Heart right ventricle (tissue), 16 donors: ENCODE measurements at regions of chr2 and their contacts with region 1.

Region 1: GRCh38 chr2:20446917-20447436 is at the start of gene RHOB:
- DNase-seq: peak; percentile 96 to 97
- ATAC-seq: peak; percentile 88 to 93 (median 90)
- H3K4me3 ChIP-seq: peak within 1 kb of the TSS; percentile 81 to 97 (median 93)
- H3K27ac ChIP-seq: peak within 1 kb of the TSS; percentile 95 to 100 (median 99)
- H3K4me1 ChIP-seq: peaks cover 13 to 61% (median 52%) of the 10 kb centered on the region in 9 donors
- H3K27me3 ChIP-seq: no peaks in the 10 kb centered on the region
- CTCF ChIP-seq: peak in 2 of 9 donors; percentile 4 to 7
- total RNA-seq, gene RHOB: 105 to 313 (median 157) TPM

Region 2: DNA sequence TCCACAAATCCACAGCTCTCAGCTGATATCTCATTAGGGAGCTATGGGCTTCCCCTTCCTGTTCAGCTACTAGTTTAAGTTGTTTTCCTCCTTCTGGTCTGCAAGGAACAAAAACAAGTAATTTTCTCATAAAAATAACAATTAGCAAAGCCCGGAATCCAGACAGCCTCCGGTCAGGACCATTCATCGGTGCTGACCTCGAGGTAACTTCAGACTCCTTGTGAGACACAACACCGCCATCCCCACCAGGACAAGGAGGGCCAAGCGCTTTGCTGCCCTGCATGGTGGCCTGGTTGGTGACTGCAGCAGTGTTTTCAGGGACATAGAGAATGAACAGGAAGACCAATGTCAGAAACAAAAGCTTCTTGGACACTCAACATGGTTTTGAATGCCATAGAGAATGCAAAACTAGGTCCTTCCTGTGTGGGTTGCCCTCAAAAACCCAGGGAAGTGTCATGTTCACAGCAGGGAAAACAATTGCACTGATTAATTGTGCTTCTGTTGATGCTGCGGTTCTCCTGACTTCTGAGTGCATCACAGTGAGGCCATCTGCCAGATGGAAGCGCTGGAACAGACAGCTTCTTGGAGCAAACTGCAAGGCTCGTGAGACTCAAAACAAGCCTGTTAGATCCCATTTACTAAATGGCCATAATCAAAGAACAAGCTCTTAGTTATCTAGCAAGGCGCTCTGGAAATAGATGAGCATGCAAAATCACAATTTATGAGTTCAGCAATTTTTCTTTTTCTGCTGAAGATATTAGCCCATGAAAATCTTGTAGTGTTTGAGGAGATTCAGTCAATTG is 126.8 kb after region 1 on chr2:
- intact Hi-C with region 1: loop called in 3 of 10 experiments (anchors 2 to 5 kb)
- DNase-seq: no peak
- ATAC-seq: no peak
- H3K4me3 ChIP-seq: no peak overlapping the region
- H3K27ac ChIP-seq: peak overlapping the region in 9 of 10 donors; percentile 63 to 95 (median 77)
- H3K4me1 ChIP-seq: peaks cover 42 to 100% (median 96%) of the 10 kb centered on the region in 9 donors
- H3K27me3 ChIP-seq: no peaks in the 10 kb centered on the region
- CTCF ChIP-seq: no peak

Region 3: GRCh38 chr2:20578895-20579825 is 132.2 kb after region 1 on chr2:
- intact Hi-C with region 1: loop called in 2 of 10 experiments (anchors 5 kb)
- DNase-seq: peak; percentile 73 to 92
- ATAC-seq: peak; percentile 85 to 94 (median 91)
- H3K4me3 ChIP-seq: no peak overlapping the region
- H3K27ac ChIP-seq: peak overlapping the region; percentile 57 to 95 (median 82)
- H3K4me1 ChIP-seq: peaks cover 28 to 83% (median 70%) of the 10 kb centered on the region in 9 donors
- H3K27me3 ChIP-seq: no peaks in the 10 kb centered on the region
- CTCF ChIP-seq: no peak

Region 4: DNA sequence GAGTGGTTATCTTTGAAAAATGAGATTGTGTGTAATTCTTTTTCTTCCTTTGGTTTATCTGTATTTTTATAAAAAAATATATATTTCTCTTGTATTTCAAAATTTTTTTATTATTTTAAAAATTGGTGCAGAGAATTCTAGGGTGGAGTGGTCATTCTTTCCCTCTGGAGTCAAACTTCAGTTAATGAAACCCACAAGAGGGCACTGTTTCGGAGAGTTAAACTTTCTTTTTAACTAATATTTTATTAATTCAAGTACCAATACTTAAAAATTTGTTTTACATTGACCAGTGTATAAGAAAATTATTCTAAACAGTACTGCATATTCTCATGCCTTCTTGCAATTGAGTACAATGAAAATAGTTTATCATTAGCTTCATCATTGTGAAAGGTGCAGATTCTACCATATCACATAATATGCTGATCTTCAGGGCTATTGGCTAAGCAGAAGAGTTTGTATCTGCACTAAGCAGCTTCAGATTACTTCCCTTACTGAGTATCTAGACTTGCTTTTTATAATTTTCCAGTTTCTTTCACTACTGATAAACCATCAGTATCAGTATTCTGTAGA is 153.9 kb after region 1 on chr2:
- intact Hi-C with region 1: loop called in 2 of 10 experiments (anchors 1 to 2 kb)
- DNase-seq: no peak
- ATAC-seq: no peak
- H3K4me3 ChIP-seq: no peak overlapping the region
- H3K27ac ChIP-seq: peak overlapping the region in 8 of 10 donors; percentile 65 to 88 (median 85)
- H3K4me1 ChIP-seq: peaks cover 29 to 83% (median 72%) of the 10 kb centered on the region in 9 donors
- H3K27me3 ChIP-seq: no peaks in the 10 kb centered on the region
- CTCF ChIP-seq: peak in 8 of 9 donors; percentile 9 to 73 (median 52)

Region 5: DNA sequence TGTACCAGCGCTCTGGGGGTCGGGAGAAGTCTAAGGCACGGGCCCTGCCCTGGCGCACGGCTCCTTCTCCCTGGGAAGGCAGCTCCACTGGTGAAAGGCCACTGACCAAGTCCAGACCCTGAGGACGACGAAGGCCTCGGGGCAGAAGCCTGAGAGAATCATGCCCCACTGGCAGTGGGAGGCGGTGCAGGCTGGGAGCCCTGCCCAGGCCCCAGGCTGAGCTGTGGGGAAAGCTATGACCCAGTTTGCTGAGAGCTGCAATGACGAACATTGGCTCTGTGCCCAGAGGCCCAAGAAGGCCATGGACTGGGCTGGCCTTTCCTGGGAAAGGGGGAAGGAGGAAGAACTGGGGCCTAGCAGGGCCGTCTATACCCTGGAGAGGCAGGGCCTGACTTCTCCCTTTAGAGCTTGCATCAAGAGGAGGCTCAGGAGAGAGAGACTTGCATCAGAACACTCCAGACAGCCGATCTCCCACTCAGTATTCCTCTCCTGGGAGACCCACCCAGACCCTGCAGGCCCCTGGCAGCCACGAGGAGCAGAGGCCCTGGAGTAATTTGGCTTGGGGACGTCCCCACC is 171.0 kb after region 1 on chr2:
- intact Hi-C with region 1: loop called in 5 of 10 experiments (anchors 1 to 5 kb)
- DNase-seq: peak; percentile 96 to 98
- ATAC-seq: peak; percentile 77 to 90 (median 84)
- H3K4me3 ChIP-seq: peak overlapping the region in 1 of 10 donors; percentile 1
- H3K27ac ChIP-seq: peak overlapping the region; percentile 87 to 99 (median 96)
- H3K4me1 ChIP-seq: peaks cover 63 to 100% (median 92%) of the 10 kb centered on the region in 9 donors
- H3K27me3 ChIP-seq: no peaks in the 10 kb centered on the region
- CTCF ChIP-seq: peak; percentile 35 to 73 (median 60)

Region 6: DNA sequence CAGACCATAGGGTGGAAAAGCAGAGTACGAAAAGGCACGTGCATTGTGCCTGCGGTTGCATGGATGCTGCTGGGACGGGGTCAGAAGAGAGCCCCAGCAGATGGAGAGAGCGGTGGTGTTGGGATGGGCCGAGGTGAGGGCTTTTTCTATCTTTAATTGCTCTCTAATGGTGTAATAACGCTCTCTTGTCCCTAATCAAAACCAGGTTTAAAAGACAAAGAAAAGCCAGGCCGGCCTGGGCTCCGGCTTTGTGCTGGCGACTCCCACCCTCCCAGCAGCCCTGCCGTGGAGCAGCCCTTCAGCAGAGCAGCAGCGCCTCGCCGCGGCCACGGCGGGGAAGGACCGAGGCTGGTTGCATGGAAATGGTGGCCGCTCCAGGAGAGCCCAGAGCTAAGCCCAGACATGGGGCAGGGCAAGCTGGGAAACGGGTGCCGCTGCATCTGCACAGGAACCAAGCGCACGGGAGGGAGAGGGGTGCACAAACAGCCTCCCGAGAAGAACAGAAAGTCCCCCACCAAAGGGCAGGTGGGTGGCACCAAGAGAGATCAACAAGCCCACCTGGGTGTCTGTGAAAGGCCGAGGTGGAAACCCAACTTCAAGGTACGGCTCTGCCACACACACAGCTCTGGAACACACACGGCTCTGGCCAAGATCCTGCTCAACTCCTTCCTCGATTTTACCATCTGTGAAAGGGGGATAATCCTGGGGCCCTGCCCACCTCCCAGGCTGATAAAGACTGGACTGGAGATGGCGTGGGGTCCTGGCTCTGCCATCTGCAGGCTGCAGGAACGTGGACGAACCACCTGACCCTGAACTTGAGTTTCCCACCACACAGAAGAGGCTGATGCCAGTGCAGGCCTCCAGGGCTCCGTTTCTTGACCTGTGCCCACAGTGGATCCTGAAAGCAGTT is 189.0 kb after region 1 on chr2:
- intact Hi-C with region 1: loop called in 9 of 10 experiments (anchors 1 to 5 kb)
- DNase-seq: peak; percentile 88 to 91
- ATAC-seq: peak; percentile 80 to 93 (median 90)
- H3K4me3 ChIP-seq: peak overlapping the region in 1 of 10 donors; percentile 11
- H3K27ac ChIP-seq: peak overlapping the region; percentile 32 to 87 (median 74)
- H3K4me1 ChIP-seq: peaks cover 32 to 72% (median 49%) of the 10 kb centered on the region in 9 donors
- H3K27me3 ChIP-seq: no peaks in the 10 kb centered on the region
- CTCF ChIP-seq: peak; percentile 88 to 98 (median 94)

Region 7: GRCh38 chr2:20642055-20642971 is 195.3 kb after region 1 on chr2:
- intact Hi-C with region 1: loop called in 6 of 10 experiments (anchors 1 to 5 kb)
- DNase-seq: peak; percentile 71 to 85
- ATAC-seq: peak; percentile 81 to 95 (median 93)
- H3K4me3 ChIP-seq: no peak overlapping the region
- H3K27ac ChIP-seq: peak overlapping the region in 7 of 10 donors; percentile 5 to 61 (median 50)
- H3K4me1 ChIP-seq: peaks cover 5 to 48% (median 31%) of the 10 kb centered on the region in 9 donors
- H3K27me3 ChIP-seq: no peaks in the 10 kb centered on the region
- CTCF ChIP-seq: peak; percentile 92 to 98 (median 97)

Region 8: GRCh38 chr2:21301871-21302455 is 855.0 kb after region 1 on chr2:
- intact Hi-C with region 1: no loop called
- DNase-seq: no peak
- ATAC-seq: peak in 6 of 8 donors; percentile 54 to 87 (median 66)
- H3K4me3 ChIP-seq: no peak overlapping the region
- H3K27ac ChIP-seq: no peak overlapping the region
- H3K4me1 ChIP-seq: peaks cover 0 to 14% (median 0%) of the 10 kb centered on the region in 9 donors
- H3K27me3 ChIP-seq: no peaks in the 10 kb centered on the region
- CTCF ChIP-seq: no peak

Region 9: DNA sequence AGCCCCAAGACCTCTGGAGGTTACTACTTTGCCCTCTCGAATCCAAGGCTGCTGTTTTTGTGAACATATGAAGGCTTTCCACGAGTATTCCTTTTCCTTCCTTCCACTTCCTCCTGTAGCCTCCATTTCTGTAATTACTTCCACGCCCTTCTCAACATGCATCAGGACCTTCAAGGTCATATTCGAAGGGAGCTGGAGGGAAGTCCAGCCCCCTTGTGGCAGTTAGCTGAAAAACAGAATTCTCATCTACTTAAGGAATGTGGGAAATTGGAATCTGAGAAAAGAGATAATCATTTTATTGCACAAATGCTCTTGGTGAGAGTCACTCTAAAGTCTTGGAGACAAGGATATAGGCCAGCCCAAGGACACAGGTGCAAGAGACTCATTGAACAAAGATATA is 1677.0 kb after region 1 on chr2:
- intact Hi-C with region 1: no loop called
- DNase-seq: no peak
- ATAC-seq: no peak
- H3K4me3 ChIP-seq: no peak overlapping the region
- H3K27ac ChIP-seq: no peak overlapping the region
- H3K4me1 ChIP-seq: no peaks in the 10 kb centered on the region
- H3K27me3 ChIP-seq: no peaks in the 10 kb centered on the region
- CTCF ChIP-seq: peak in 2 of 9 donors; percentile 8 to 17